A673 (cell line): ENCODE measurements at regions of chr14 and their contacts with region 1.

Region 1: GRCh38 chr14:74309125-74310022 is 6.6 kb upstream of the ABCD4 start:
- DNase-seq: no peak
- H3K4me3 ChIP-seq: no peak overlapping the region
- H3K27ac ChIP-seq: no peak overlapping the region
- H3K4me1 ChIP-seq: no peaks in the 10 kb centered on the region
- H3K27me3 ChIP-seq: no peaks in the 10 kb centered on the region
- CTCF ChIP-seq: no peak

Region 2: DNA sequence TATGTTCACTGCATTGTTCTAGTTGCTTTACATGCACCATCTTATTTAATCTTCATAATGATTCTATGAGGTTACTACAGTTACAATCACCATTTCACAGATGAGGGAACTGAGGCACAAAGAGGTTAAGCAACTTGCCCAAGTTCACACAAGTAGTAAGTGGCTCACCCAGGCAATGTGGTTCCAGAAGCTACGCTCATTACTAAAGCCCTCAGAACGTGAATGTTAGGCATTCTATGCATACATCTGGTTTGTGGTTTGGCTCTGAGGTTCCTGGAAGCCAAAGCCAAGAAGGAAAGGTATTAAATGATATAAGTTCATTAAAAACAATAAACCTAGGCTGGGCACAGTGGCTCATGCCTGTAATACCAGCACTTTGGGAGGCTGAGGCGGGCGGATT is 24.5 kb after region 1 on chr14:
- CTCF ChIA-PET with region 1: no interaction called
- POLR2A ChIA-PET with region 1: interaction called, 15 read pairs
- intact Hi-C with region 1: no loop called
- DNase-seq: no peak
- H3K4me3 ChIP-seq: no peak overlapping the region
- H3K27ac ChIP-seq: no peak overlapping the region
- H3K4me1 ChIP-seq: no peaks in the 10 kb centered on the region
- H3K27me3 ChIP-seq: no peaks in the 10 kb centered on the region
- CTCF ChIP-seq: no peak

Region 3: GRCh38 chr14:74349757-74350156 is 40.4 kb after region 1 on chr14:
- CTCF ChIA-PET with region 1: interaction called, 16 read pairs
- POLR2A ChIA-PET with region 1: no interaction called
- intact Hi-C with region 1: no loop called
- DNase-seq: no peak
- H3K4me3 ChIP-seq: no peak overlapping the region
- H3K27ac ChIP-seq: no peak overlapping the region
- H3K4me1 ChIP-seq: no peaks in the 10 kb centered on the region
- H3K27me3 ChIP-seq: no peaks in the 10 kb centered on the region
- CTCF ChIP-seq: no peak